ENCODE measurements at regions of chr15 and their contacts with region 1.

Region 1: DNA sequence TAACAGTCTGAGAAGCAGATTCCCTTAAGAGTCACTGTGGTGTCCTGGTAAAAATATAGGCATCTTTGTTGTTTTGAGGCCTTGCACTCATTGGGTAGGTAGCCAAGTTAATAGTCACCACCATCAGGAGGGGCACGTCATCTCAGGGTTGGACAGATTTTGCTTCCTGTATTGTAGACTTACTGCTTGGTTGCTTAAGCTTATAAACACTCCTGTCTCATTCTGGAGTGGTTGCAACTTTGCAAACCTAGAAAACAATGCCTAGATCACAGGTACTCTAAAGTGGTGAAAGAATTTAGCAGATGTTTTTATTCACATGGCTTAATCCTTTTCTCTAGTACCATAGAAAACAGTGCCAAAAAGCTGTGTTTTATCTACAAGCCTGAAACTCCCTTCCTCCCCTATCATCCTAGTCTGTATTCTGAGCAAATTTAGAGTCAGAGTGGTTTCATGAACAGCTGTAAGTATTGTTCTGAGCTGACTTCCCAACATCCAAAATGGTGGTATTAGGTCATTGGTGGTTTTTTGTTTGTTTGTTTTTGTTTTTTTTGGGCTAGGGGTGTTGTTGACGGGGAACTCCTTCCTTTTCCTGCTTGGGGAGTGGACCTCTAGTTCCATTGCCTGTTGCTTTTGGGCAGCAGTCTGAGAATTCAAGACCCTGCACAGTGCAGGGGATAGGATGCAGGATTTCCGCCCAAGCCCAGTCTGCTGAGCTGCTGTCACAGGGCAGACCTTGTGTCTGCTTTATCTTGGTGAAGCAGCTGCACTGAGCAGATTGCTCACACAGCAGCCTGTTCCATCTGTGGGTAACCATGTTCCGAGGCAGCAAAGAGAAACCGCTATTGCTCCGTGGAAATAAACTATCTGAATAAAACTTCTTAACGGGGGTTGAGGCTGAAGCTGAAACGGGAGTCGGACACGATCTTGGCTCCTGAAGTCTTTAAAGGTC is 202.0 kb downstream of the AKAP13 start:
- DNase-seq: no peak
- H3K4me3 ChIP-seq: peak overlapping the region; percentile 5 to 14
- H3K27ac ChIP-seq: peak overlapping the region; percentile 68 to 70
- H3K4me1 ChIP-seq: no peaks in the 10 kb centered on the region
- H3K27me3 ChIP-seq: no peaks in the 10 kb centered on the region
- CTCF ChIP-seq: no peak
- POLR2A ChIP-seq: no peak

Region 2: GRCh38 chr15:85485956-85486567 is 96.3 kb before region 1 on chr15:
- intact Hi-C with region 1: loop called (anchors 5 kb)
- DNase-seq: peak; percentile 82
- H3K4me3 ChIP-seq: no peak overlapping the region
- H3K27ac ChIP-seq: no peak overlapping the region
- H3K4me1 ChIP-seq: peaks cover 2% of the 10 kb centered on the region
- H3K27me3 ChIP-seq: no peaks in the 10 kb centered on the region
- CTCF ChIP-seq: peak; percentile 54 to 79 (median 71)
- POLR2A ChIP-seq: no peak

Region 3: DNA sequence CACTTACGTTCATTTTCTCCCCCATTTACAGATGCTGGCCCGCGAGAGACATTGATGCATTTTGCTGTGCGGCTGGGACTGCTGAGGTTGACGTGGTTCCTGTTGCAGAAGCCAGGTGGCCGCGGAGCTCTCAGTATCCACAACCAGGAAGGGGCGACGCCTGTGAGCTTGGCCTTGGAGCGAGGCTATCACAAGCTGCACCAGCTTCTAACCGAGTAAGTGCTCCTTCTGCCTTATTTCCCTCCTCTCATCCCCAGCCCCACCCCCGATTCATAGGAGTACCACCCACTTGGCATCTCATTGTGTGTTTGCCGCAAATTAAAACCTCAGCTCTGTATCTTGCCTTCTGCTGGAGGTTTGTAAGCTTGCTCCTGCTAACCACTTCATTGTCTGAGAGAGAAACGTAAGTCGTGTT is 38.7 kb before region 1 on chr15:
- intact Hi-C with region 1: loop called (anchors 5 kb)
- DNase-seq: peak; percentile 83
- H3K4me3 ChIP-seq: peak overlapping the region; percentile 12 to 20
- H3K27ac ChIP-seq: peak overlapping the region; percentile 67 to 69
- H3K4me1 ChIP-seq: no peaks in the 10 kb centered on the region
- H3K27me3 ChIP-seq: no peaks in the 10 kb centered on the region
- CTCF ChIP-seq: peak in 2 of 4 experiments; percentile 53 to 61
- POLR2A ChIP-seq: peak; percentile 31